CD14-positive monocyte (primary cell): ENCODE measurements at regions of chr3 and their contacts with region 1.

Region 1: GRCh38 chr3:170317954-170318353 is 39.6 kb upstream of the SKIL start:
- DNase-seq: no peak
- H3K4me3 ChIP-seq: no peak overlapping the region
- H3K4me3 Mint-ChIP-seq: no peak overlapping the region
- H3K27ac ChIP-seq: no peak overlapping the region
- H3K27ac Mint-ChIP-seq: no peak overlapping the region
- H3K4me1 ChIP-seq: peaks cover 17 to 22% of the 10 kb centered on the region in 2 donors
- H3K4me1 Mint-ChIP-seq: peaks cover 16% of the 10 kb centered on the region
- H3K27me3 ChIP-seq: no peaks in the 10 kb centered on the region
- H3K27me3 Mint-ChIP-seq: peaks cover 0 to 2% (median 0%) of the 10 kb centered on the region in 3 donors
- CTCF ChIP-seq: no peak

Region 2: DNA sequence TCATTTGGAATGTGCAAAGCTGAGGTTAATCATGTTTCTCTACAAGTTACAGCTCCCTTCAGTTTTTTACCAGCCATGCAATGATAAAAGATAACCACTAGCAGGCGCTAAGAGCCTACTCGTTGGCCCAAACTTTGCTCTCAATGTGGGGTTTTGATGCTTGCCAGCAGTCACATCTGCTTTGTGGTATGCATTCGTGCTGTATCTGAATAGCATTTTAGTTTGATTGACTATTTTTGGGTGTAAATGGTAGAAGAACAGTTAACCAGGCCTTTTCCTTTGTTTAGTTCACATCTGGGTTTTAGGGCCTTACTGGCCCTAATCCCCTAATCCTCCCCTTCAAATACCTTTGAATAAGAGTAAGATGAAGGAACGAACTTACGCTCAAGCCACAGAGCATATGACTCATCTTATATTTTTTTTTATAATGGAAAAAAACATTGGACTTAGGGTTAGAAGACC is 96.3 kb after region 1 on chr3:
- intact Hi-C with region 1: loop called (anchors 5 to 10 kb)
- DNase-seq: peak; percentile 25 to 54 (median 35)
- H3K4me3 ChIP-seq: no peak overlapping the region
- H3K4me3 Mint-ChIP-seq: peak overlapping the region in 1 of 2 donors; percentile 31
- H3K27ac ChIP-seq: no peak overlapping the region
- H3K27ac Mint-ChIP-seq: no peak overlapping the region
- H3K4me1 ChIP-seq: peaks cover 4 to 10% of the 10 kb centered on the region in 2 donors
- H3K4me1 Mint-ChIP-seq: peaks cover 7% of the 10 kb centered on the region
- H3K27me3 ChIP-seq: peaks cover 26 to 30% of the 10 kb centered on the region in 2 donors
- H3K27me3 Mint-ChIP-seq: peaks cover 24 to 47% (median 27%) of the 10 kb centered on the region in 3 donors
- CTCF ChIP-seq: peak; percentile 91